ENCODE measurements at regions of chr3 and their contacts with region 1.

Region 1: GRCh38 chr3:183635431-183636220 is at the start of gene KLHL24:
- DNase-seq: peak; percentile 82 to 95 (median 90)
- ATAC-seq: peak; percentile 73
- H3K4me3 ChIP-seq: peak within 1 kb of the TSS; percentile 88 to 97
- H3K4me3 Mint-ChIP-seq: peak within 1 kb of the TSS; percentile 94
- H3K27ac ChIP-seq: peak within 1 kb of the TSS; percentile 94 to 99
- H3K27ac Mint-ChIP-seq: peak within 1 kb of the TSS; percentile 97
- H3K4me1 ChIP-seq: peaks cover 25% of the 10 kb centered on the region
- H3K4me1 Mint-ChIP-seq: peaks cover 34% of the 10 kb centered on the region
- H3K27me3 ChIP-seq: no peaks in the 10 kb centered on the region
- H3K27me3 Mint-ChIP-seq: no peaks in the 10 kb centered on the region
- CTCF ChIP-seq: no peak
- total RNA-seq, gene KLHL24: 180 to 181 TPM

Region 2: DNA sequence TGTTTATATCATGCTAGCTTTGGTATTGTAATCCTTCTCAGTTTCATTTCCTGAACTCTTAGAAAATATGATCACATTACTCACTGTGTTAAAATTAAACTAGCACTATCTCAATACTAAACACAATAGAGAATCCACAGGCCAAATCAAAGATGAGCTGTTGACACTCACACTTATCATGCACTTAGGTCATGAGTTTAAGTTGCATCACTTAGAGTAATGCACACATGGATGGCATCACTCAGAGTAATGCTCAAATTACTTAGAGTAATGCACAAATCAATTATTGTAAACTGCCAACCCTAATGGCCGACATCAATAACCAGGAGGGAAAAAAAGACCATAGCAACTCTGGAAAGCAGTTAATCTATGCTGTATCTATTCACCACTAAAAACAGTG is 167.2 kb before region 1 on chr3:
- CTCF ChIA-PET with region 1: interaction called, 4 read pairs
- POLR2A ChIA-PET with region 1: no interaction called
- intact Hi-C with region 1: loop called in 1 of 2 experiments (anchors 2 kb)
- DNase-seq: no peak
- ATAC-seq: no peak
- H3K4me3 ChIP-seq: no peak overlapping the region
- H3K4me3 Mint-ChIP-seq: no peak overlapping the region
- H3K27ac ChIP-seq: no peak overlapping the region
- H3K27ac Mint-ChIP-seq: no peak overlapping the region
- H3K4me1 ChIP-seq: peaks cover 3% of the 10 kb centered on the region
- H3K4me1 Mint-ChIP-seq: peaks cover 5% of the 10 kb centered on the region
- H3K27me3 ChIP-seq: no peaks in the 10 kb centered on the region
- H3K27me3 Mint-ChIP-seq: peaks cover 2% of the 10 kb centered on the region
- CTCF ChIP-seq: no peak

Region 3: DNA sequence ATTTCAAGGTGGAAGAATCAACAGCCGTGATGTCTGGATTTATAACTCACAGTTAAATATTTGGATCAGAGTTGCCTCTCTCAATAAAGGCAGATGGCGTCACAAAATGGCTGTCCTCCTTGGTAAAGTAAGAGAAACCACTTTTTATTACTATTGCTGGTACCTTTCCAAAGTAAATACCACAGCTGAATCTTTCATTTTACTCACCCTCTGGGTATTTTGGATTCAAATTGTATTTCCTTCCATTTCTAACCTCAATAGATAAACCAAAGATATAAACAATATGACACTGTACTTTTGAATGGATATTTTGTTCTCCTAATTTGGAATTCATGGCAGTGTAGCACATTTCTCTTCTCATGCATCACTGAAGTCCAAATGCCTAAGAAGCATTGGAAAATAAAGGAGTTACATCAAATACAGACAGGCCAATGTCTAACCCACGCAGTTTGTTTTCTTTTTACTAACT is 29.3 kb after region 1 on chr3:
- CTCF ChIA-PET with region 1: no interaction called
- POLR2A ChIA-PET with region 1: interaction called, 6 read pairs
- intact Hi-C with region 1: loop called in 1 of 2 experiments (anchors 5 kb)
- DNase-seq: no peak
- ATAC-seq: no peak
- H3K4me3 ChIP-seq: no peak overlapping the region
- H3K4me3 Mint-ChIP-seq: no peak overlapping the region
- H3K27ac ChIP-seq: no peak overlapping the region
- H3K27ac Mint-ChIP-seq: no peak overlapping the region
- H3K4me1 ChIP-seq: no peaks in the 10 kb centered on the region
- H3K4me1 Mint-ChIP-seq: peaks cover 17% of the 10 kb centered on the region
- H3K27me3 ChIP-seq: no peaks in the 10 kb centered on the region
- H3K27me3 Mint-ChIP-seq: no peaks in the 10 kb centered on the region
- CTCF ChIP-seq: no peak

Region 4: GRCh38 chr3:184135149-184135910 is 499.7 kb after region 1 on chr3 and contains the start of gene EIF2B5:
- CTCF ChIA-PET with region 1: no interaction called
- POLR2A ChIA-PET with region 1: no interaction called
- intact Hi-C with region 1: loop called in 1 of 2 experiments (anchors 10 kb)
- DNase-seq: peak; percentile 67 to 95 (median 87)
- ATAC-seq: peak; percentile 89
- H3K4me3 ChIP-seq: peak within 1 kb of the TSS; percentile 79 to 91
- H3K4me3 Mint-ChIP-seq: peak within 1 kb of the TSS; percentile 100
- H3K27ac ChIP-seq: peak within 1 kb of the TSS; percentile 76 to 83
- H3K27ac Mint-ChIP-seq: peak within 1 kb of the TSS; percentile 98
- H3K4me1 ChIP-seq: peaks cover 25% of the 10 kb centered on the region
- H3K4me1 Mint-ChIP-seq: peaks cover 41% of the 10 kb centered on the region
- H3K27me3 ChIP-seq: no peaks in the 10 kb centered on the region
- H3K27me3 Mint-ChIP-seq: no peaks in the 10 kb centered on the region
- CTCF ChIP-seq: no peak
- total RNA-seq, gene EIF2B5: 52.6 to 61.9 TPM

Region 5: GRCh38 chr3:184362668-184363540 is 727.3 kb after region 1 on chr3:
- CTCF ChIA-PET with region 1: no interaction called
- POLR2A ChIA-PET with region 1: no interaction called
- intact Hi-C with region 1: loop called in 1 of 2 experiments (anchors 5 kb)
- DNase-seq: peak; percentile 81 to 98 (median 93)
- ATAC-seq: peak; percentile 71
- H3K4me3 ChIP-seq: peak overlapping the region; percentile 62 to 93
- H3K4me3 Mint-ChIP-seq: peak overlapping the region; percentile 98
- H3K27ac ChIP-seq: peak overlapping the region; percentile 74 to 87
- H3K27ac Mint-ChIP-seq: peak overlapping the region; percentile 93
- H3K4me1 ChIP-seq: peaks cover 15% of the 10 kb centered on the region
- H3K4me1 Mint-ChIP-seq: peaks cover 30% of the 10 kb centered on the region
- H3K27me3 ChIP-seq: no peaks in the 10 kb centered on the region
- H3K27me3 Mint-ChIP-seq: no peaks in the 10 kb centered on the region
- CTCF ChIP-seq: peak; percentile 13

Region 6: GRCh38 chr3:185188816-185189215 is 1553.2 kb after region 1 on chr3:
- CTCF ChIA-PET with region 1: no interaction called
- POLR2A ChIA-PET with region 1: no interaction called
- intact Hi-C with region 1: no loop called
- DNase-seq: no peak
- ATAC-seq: no peak
- H3K4me3 ChIP-seq: no peak overlapping the region
- H3K4me3 Mint-ChIP-seq: no peak overlapping the region
- H3K27ac ChIP-seq: no peak overlapping the region
- H3K27ac Mint-ChIP-seq: no peak overlapping the region
- H3K4me1 ChIP-seq: no peaks in the 10 kb centered on the region
- H3K4me1 Mint-ChIP-seq: no peaks in the 10 kb centered on the region
- H3K27me3 ChIP-seq: no peaks in the 10 kb centered on the region
- H3K27me3 Mint-ChIP-seq: no peaks in the 10 kb centered on the region
- CTCF ChIP-seq: no peak